Mucosa of descending colon (tissue), 3 donors: ENCODE measurements at regions of chr6 and their contacts with region 1.

Region 1: DNA sequence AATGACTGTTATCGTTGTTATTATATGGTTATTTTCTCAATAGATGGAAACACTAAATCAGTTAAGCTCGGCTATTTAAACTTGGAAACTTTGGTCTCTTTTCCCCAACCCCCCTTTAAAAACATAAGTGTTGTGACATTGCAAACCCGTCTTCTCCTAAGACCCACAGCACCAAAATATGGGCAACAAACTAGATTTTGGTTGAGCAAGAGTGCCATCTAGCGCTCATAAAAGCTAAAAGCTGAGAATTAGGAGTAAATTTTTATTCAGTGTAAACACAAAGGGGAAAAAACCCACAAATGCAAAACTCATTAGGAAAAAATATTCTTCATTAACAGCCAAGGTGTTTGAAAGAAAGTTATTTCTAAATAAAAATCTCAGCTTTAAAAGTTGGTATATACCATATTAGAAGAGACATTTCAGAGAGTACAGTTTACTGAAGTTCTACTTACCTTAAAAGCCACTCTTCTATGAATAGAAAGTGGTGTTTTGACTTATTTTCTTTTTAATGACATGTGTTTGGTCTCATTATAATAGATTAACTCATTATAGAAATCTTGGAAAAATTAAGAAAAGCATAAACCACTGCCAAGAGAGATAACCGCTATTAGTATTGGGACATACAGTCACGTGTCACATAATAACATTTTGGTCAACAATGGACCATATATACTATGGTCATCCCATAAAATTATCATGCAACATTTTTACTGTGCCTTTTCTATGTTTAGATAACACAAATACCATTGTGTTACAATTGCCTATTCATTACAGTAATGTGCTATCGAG is 21.1 kb downstream of the SESN1 start:
- DNase-seq: peak in 1 of 3 donors; percentile 78
- ATAC-seq: peak; percentile 77
- H3K4me3 ChIP-seq: no peak overlapping the region
- H3K4me1 ChIP-seq: peaks cover 8% of the 10 kb centered on the region
- CTCF ChIP-seq: peak; percentile 35

Region 2: DNA sequence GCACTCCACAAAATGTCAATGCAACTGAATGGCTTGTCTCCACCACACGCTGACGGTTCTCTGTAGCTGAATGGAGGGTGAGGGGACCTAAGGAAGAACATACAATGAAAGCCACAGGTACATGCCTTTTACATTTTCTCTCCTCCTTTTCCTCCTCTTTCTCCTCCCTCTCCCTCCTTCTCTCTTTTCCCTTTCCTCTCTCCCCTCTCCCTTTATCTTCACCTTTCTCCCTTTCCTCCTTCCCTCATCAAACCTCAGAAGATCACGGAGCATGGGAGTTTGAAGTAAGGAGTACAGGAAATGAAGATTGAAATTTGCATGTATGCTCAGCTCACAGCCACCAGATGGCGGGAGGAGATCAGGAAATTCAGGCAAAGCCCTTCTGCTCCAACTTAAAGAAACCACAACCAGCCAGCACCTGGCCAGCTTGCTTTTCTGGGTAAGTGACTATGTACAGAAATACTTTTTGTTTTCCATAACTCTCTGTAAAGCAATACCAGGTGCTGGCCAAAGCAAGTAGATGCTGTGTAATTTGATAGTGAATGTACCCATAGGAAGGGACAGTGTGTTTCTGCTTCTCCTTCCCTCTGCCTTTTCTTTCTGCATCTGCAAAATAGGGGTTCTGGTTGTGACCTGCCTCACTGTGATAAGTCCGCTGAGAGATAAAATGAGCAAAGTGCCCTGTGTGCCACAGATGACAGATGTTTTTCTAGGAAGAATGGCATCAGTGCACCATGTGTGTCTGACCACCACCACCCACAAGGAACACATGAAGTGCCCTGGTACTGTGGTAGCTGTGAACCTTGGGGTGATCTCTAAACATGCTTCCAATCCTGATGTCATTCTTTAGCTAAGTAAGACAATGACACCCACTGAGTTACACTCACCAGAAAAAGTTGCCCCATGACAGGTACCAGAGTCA is 531.4 kb before region 1 on chr6:
- intact Hi-C with region 1: loop called (anchors 2 to 10 kb)
- DNase-seq: peak in 2 of 3 donors; percentile 67 to 83
- ATAC-seq: peak; percentile 94
- H3K4me3 ChIP-seq: no peak overlapping the region
- H3K4me1 ChIP-seq: no peaks in the 10 kb centered on the region
- CTCF ChIP-seq: peak; percentile 65

Region 3: GRCh38 chr6:108848116-108848868 is 225.2 kb before region 1 on chr6 and contains the start of gene ARMC2:
- intact Hi-C with region 1: no loop called
- DNase-seq: peak; percentile 94 to 99 (median 95)
- ATAC-seq: peak; percentile 98
- H3K4me3 ChIP-seq: peak within 1 kb of the TSS; percentile 27
- H3K4me1 ChIP-seq: peaks cover 4% of the 10 kb centered on the region
- CTCF ChIP-seq: no peak
- total RNA-seq, gene ARMC2: 3.5 to 5.5 (median 4.8) TPM

Region 4: GRCh38 chr6:108904741-108905140 is 168.8 kb before region 1 on chr6:
- intact Hi-C with region 1: loop called in 1 of 2 experiments (anchors 10 kb)
- DNase-seq: peak in 1 of 3 donors; percentile 35
- ATAC-seq: peak; percentile 79
- H3K4me3 ChIP-seq: no peak overlapping the region
- H3K4me1 ChIP-seq: no peaks in the 10 kb centered on the region
- CTCF ChIP-seq: no peak

Region 5: DNA sequence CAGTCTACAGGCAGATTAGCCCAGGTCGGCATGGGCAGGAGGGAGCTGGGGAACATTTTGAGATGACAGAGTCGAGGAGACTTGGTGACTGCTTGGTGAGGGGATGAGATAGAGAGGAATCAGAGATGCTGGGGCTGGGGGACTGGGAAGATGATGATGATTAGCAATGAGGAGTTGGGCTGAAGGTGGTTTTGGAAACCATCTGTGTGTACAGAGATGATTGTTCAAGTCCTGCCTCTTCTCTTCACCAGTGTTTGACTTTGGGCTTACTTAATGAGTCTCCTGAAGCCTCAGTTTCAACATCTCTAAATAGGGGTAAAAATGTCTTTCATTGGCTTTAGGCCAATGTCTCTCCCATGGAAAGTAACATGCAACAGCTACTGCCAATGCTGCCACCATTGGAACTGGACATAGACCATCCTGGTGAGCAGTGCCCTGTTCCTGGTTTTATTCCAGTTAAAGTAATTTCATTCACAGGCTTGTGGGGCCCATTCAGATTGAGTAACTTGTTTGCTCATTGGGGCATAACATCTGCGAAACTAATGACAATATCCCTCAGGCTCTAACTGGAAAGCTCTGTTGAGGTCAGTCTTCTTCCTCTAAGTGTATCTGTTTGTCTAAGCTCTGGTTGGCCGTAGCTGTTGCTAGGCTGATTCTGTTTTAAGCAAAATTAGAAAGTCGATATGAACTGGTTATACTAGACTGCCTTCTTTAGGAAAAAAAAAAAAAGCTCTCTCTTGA is 126.3 kb before region 1 on chr6:
- intact Hi-C with region 1: loop called in 1 of 2 experiments (anchors 10 kb)
- DNase-seq: no peak
- ATAC-seq: peak; percentile 47
- H3K4me3 ChIP-seq: no peak overlapping the region
- H3K4me1 ChIP-seq: peaks cover 6% of the 10 kb centered on the region
- CTCF ChIP-seq: no peak

Region 6: GRCh38 chr6:109202409-109203284 is 129.1 kb after region 1 on chr6:
- intact Hi-C with region 1: no loop called
- DNase-seq: no peak
- ATAC-seq: no peak
- H3K4me3 ChIP-seq: no peak overlapping the region
- H3K4me1 ChIP-seq: no peaks in the 10 kb centered on the region
- CTCF ChIP-seq: no peak

Region 7: DNA sequence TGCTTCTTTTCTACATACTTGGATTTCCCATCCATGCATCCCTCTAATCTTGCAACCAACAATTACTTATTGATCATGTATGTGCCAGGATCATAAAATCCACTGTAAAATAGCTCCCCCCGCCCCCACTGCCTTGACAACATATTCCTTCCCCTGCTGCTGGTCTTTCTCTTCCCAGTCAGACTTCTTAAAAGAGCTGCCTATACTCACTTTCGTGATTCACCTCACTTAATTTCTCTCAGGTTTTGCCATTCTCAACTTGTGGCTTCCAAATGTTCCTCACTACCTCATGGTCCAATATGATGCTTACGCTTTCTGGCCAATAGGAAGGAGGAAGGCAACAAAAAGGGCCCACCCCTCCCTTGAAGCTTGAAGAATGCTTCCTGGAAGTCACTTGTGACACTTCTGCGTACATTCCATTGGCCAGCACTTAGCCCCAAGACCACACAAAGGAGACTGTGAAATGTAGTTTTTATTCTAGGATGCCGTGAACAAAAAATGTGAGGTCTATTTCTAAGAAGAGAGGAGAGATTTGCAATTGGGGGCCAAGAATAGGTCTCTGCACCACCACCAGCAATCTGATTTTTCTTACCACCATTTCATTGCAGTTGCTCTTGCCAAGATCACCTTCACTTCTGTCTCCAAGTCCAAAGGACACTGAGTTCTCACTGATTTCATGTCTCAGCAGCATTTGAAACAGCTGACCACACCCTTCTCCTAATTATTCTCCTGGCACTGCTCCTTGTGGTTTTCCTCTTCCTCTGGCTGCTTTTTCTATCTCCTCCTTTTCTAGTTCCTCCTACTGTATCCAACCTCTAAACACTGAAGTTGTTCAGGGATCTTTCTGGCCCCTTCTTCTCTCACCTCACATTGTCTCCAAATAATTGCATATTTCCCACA is 277.9 kb after region 1 on chr6:
- intact Hi-C with region 1: no loop called
- DNase-seq: peak in 1 of 3 donors; percentile 76
- ATAC-seq: peak; percentile 56
- H3K4me3 ChIP-seq: no peak overlapping the region
- H3K4me1 ChIP-seq: peaks cover 45% of the 10 kb centered on the region
- CTCF ChIP-seq: no peak

Region 8: GRCh38 chr6:109793793-109794192 is 720.3 kb after region 1 on chr6:
- intact Hi-C with region 1: no loop called
- DNase-seq: peak in 1 of 3 donors; percentile 63
- ATAC-seq: peak; percentile 98
- H3K4me3 ChIP-seq: no peak overlapping the region
- H3K4me1 ChIP-seq: peaks cover 3% of the 10 kb centered on the region
- CTCF ChIP-seq: no peak